ENCODE measurements at regions of chr4 and their contacts with region 1.

Region 1: DNA sequence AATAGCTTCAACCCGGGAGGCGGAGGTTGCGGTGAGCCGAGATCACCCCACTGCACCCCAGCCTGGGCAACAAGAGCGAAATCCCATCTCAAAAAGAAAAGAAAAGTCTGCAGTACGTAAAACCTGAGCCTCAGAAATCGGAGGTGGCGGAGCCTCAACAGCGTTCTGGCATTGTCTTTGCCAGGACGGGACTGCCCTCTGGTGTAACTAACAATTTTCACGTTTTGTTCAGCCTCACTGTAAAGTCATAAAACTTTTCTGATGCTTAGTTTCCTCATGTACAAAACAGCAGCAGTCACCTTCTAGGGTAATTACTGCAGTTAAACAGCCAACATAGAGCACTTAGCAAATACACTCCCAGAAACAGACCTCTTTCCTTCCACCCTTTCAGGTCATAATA is 121.7 kb downstream of the RBM47 start:
- DNase-seq: peak; percentile 40 to 42
- H3K4me3 ChIP-seq: no peak overlapping the region
- H3K4me3 Mint-ChIP-seq: no peak overlapping the region
- H3K27ac Mint-ChIP-seq: no peak overlapping the region
- H3K4me1 ChIP-seq: peaks cover 20% of the 10 kb centered on the region
- H3K4me1 Mint-ChIP-seq: peaks cover 12% of the 10 kb centered on the region
- H3K27me3 ChIP-seq: no peaks in the 10 kb centered on the region
- H3K27me3 Mint-ChIP-seq: no peaks in the 10 kb centered on the region
- CTCF ChIP-seq: peak in 1 of 2 experiments; percentile 25

Region 2: DNA sequence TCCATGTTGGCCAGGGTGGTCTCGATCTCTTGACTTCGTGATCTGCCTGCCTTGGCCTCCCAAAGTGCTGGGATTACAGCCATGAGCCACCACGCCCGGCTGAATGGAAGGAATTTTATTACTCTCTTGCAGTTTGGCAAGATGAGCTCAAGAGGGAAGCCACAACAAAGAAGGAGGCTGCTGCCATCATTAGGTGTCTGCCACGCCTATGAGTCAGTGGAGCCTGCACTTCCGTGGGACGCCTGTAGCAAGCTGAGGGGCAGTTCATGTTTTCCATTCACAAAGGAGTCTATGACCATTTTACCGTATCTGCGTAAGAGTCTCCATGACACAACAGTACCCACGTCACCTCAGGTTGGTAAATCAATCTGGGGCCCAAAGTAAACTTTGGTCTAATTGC is 224.0 kb before region 1 on chr4:
- CTCF ChIA-PET with region 1: no interaction called
- POLR2A ChIA-PET with region 1: no interaction called
- intact Hi-C with region 1: no loop called
- DNase-seq: peak; percentile 12 to 47
- H3K4me3 ChIP-seq: no peak overlapping the region
- H3K4me3 Mint-ChIP-seq: no peak overlapping the region
- H3K27ac Mint-ChIP-seq: no peak overlapping the region
- H3K4me1 ChIP-seq: no peaks in the 10 kb centered on the region
- H3K4me1 Mint-ChIP-seq: peaks cover 14% of the 10 kb centered on the region
- H3K27me3 ChIP-seq: no peaks in the 10 kb centered on the region
- H3K27me3 Mint-ChIP-seq: no peaks in the 10 kb centered on the region
- CTCF ChIP-seq: no peak

Region 3: DNA sequence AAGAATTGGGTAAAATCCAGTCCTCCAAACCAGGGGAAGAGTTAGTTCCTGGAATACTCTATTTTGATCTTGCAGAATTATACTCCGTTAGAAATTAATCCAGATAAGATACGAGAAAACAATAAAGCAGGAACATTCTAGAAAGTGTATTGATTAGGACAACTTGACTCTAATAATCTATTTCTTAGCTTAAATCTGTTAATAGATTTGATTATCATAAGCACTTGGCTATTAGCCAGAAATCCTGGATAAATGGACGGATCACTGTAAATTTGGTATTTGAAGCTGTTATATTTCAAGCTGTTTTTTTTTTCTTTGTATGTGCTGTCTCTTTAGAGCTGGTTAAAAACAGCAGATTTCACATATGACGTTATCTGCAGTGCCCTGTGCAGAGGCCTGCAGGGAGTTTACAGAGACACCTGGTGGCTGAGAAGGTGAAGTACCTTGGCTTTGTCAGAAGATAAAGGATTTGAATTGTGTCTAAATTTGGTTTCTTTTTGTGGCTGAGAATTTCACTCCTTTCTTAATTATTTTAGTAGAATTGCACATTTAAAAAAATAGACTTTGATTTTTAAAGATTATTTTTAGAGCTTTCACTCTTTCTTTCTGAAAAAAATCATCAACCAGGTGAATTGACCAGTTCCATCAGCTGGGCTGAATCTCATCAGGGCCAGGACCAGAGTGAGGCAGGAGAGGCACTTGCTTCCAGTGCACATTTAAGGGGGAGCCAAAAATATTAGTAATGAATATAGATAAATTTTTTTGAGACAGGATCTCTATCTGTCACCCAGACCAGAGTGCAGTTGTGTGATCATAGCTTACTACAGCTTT is 182.6 kb before region 1 on chr4:
- CTCF ChIA-PET with region 1: no interaction called
- POLR2A ChIA-PET with region 1: no interaction called
- intact Hi-C with region 1: loop called (anchors 1 kb)
- DNase-seq: peak; percentile 55 to 59
- H3K4me3 ChIP-seq: no peak overlapping the region
- H3K4me3 Mint-ChIP-seq: no peak overlapping the region
- H3K27ac Mint-ChIP-seq: no peak overlapping the region
- H3K4me1 ChIP-seq: peaks cover 9% of the 10 kb centered on the region; the same call in 1 of the 2 replicates
- H3K4me1 Mint-ChIP-seq: peaks cover 17% of the 10 kb centered on the region
- H3K27me3 ChIP-seq: no peaks in the 10 kb centered on the region; the same call in 1 of the 2 replicates
- H3K27me3 Mint-ChIP-seq: no peaks in the 10 kb centered on the region
- CTCF ChIP-seq: peak; percentile 76 to 83

Region 4: DNA sequence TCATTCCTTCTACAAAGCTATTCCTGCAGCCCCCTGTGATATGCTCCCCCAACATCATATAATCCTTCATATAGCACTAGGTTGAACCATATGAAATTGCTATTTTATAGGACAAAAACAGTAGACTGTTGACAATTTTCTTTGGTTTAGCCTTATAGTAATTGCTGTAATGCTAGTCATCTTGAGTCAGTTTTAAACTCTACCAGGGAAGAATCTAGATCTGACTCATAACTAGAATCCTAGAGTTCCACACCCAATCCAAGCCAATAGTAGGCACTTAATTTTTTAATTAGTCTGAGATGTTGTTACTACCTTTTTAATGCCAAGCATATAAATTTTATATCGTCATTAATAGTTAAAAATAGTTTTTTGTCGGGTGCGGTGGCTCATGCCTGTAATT is 36.1 kb before region 1 on chr4:
- CTCF ChIA-PET with region 1: no interaction called
- POLR2A ChIA-PET with region 1: no interaction called
- intact Hi-C with region 1: no loop called
- DNase-seq: no peak
- H3K4me3 ChIP-seq: no peak overlapping the region
- H3K4me3 Mint-ChIP-seq: no peak overlapping the region
- H3K27ac Mint-ChIP-seq: no peak overlapping the region
- H3K4me1 ChIP-seq: peaks cover 36% of the 10 kb centered on the region
- H3K4me1 Mint-ChIP-seq: peaks cover 25% of the 10 kb centered on the region
- H3K27me3 ChIP-seq: no peaks in the 10 kb centered on the region
- H3K27me3 Mint-ChIP-seq: no peaks in the 10 kb centered on the region
- CTCF ChIP-seq: no peak

Measured in Caco-2 (cell line).